ENCODE measurements at regions of chr4 and their contacts with region 1.

Region 1: GRCh38 chr4:105061136-105061696 is 85.5 kb upstream of the TET2 start:
- DNase-seq: peak; percentile 19
- H3K4me3 ChIP-seq: no peak overlapping the region
- H3K27ac ChIP-seq: peak overlapping the region in 1 of 4 donors; percentile 32
- H3K4me1 ChIP-seq: peaks cover 0 to 9% (median 0%) of the 10 kb centered on the region in 4 donors
- H3K27me3 ChIP-seq: no peaks in the 10 kb centered on the region
- CTCF ChIP-seq: no peak
- EP300 ChIP-seq: no peak
- POLR2A ChIP-seq: no peak

Region 2: DNA sequence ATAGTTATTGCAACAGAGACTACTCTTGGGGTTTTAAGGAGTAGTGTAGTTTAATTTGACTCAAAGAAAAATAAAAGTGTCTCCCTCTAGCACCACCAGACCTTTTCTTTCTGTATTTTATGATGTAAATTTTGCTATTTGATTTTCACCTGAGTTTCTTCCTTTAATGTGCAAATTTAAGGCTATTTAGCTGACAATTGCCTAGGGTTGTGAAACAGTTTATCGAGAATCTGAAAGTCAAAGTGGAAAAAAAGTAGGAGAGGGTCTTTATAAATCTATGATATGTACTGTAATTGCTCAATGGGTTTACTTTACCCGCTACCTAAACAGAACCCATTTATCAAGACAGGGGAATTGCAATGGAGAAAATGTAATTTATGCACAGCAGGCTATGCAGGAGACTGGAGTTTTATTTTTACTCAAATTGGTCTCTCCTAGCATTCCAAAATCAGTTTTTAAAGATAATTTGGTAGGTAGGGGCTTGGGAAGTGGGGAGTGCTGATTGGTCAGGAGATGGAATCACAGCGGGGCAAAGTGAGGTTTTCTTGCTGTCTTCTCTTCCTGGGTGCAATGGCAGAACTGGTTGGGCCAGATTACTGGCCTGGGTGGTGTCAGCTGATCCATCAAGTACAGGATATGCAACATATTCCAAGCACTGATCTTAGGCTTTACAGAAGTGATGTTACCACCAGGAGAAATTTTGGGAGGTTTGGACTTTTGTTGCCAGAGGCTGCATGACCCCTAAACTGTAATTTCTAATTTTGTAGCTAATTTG is 1112.8 kb before region 1 on chr4:
- in situ Hi-C with region 1: loop called in 1 of 4 experiments (anchors 25 kb)
- intact Hi-C with region 1: no loop called
- DNase-seq: no peak
- H3K4me3 ChIP-seq: no peak overlapping the region
- H3K27ac ChIP-seq: no peak overlapping the region
- H3K4me1 ChIP-seq: no peaks in the 10 kb centered on the region
- H3K27me3 ChIP-seq: no peaks in the 10 kb centered on the region
- CTCF ChIP-seq: no peak
- EP300 ChIP-seq: no peak
- POLR2A ChIP-seq: no peak

Region 3: GRCh38 chr4:105088110-105088879 is 27.1 kb after region 1 on chr4:
- in situ Hi-C with region 1: no loop called
- intact Hi-C with region 1: no loop called
- DNase-seq: no peak
- H3K4me3 ChIP-seq: no peak overlapping the region
- H3K27ac ChIP-seq: peak overlapping the region in 1 of 4 donors; percentile 13
- H3K4me1 ChIP-seq: peaks cover 0 to 17% (median 10%) of the 10 kb centered on the region in 4 donors
- H3K27me3 ChIP-seq: no peaks in the 10 kb centered on the region
- CTCF ChIP-seq: no peak
- EP300 ChIP-seq: no peak
- POLR2A ChIP-seq: no peak

Region 4: DNA sequence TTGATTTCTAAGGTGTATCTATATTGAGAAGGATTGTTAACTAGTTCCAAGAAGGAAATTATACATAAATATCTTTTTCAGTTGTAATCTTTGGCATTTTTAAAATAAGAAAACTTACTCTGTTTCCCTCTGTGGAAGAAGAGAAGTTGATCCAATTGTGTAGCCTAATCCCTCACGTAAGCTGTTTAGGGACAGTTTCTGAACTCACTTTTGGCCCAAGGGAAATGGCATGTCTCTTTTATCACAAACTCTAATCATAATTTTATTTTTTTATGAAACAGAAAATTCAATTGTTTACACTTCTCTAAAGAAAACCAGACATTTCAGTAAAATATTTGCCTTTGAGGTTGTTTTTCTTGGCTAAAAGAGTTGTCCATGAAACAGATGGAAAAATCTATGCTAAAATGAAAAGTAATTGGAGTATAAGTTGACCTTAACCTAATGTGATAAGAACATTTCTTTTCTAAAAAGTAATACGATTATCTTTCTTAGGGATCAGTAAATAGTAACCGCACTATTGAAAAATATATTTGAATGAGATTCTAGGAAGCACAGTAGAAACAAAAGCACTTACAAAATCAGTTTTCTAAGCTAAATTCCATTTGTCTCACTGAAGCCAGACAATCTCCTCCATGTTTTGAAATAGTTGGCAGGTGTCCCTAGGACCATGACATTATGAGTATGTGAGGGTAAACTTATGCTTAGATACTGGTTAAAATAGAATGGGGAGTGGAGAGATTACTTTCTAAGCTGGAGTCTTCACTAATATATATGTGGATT is 65.1 kb after region 1 on chr4:
- in situ Hi-C with region 1: no loop called
- intact Hi-C with region 1: no loop called
- DNase-seq: no peak
- H3K4me3 ChIP-seq: no peak overlapping the region
- H3K27ac ChIP-seq: no peak overlapping the region
- H3K4me1 ChIP-seq: peaks cover 0 to 5% (median 0%) of the 10 kb centered on the region in 4 donors
- H3K27me3 ChIP-seq: no peaks in the 10 kb centered on the region
- CTCF ChIP-seq: no peak
- EP300 ChIP-seq: no peak
- POLR2A ChIP-seq: no peak

Region 5: GRCh38 chr4:105215609-105216313 is 154.5 kb after region 1 on chr4:
- in situ Hi-C with region 1: no loop called
- intact Hi-C with region 1: no loop called
- DNase-seq: no peak
- H3K4me3 ChIP-seq: no peak overlapping the region
- H3K27ac ChIP-seq: peak overlapping the region in 2 of 4 donors; percentile 1 to 13
- H3K4me1 ChIP-seq: peaks cover 0 to 30% (median 18%) of the 10 kb centered on the region in 4 donors
- H3K27me3 ChIP-seq: no peaks in the 10 kb centered on the region
- CTCF ChIP-seq: no peak
- EP300 ChIP-seq: no peak
- POLR2A ChIP-seq: no peak